ENCODE measurements at regions of chr17 and their contacts with region 1.

Region 1: GRCh38 chr17:19362277-19363113 is at the start of gene B9D1:
- DNase-seq: peak; percentile 94
- ATAC-seq: peak; percentile 82
- H3K4me3 Mint-ChIP-seq: peak within 1 kb of the TSS; percentile 83
- H3K27ac Mint-ChIP-seq: peak within 1 kb of the TSS; percentile 73
- H3K4me1 Mint-ChIP-seq: peaks cover 22% of the 10 kb centered on the region
- H3K27me3 Mint-ChIP-seq: no peaks in the 10 kb centered on the region
- CTCF ChIP-seq: peak; percentile 96
- total RNA-seq, gene B9D1: 31.9 to 39.2 TPM (median 39.0 TPM) in 3 replicates

Region 2: GRCh38 chr17:19338031-19338990 is 24.2 kb before region 1 on chr17:
- CTCF ChIA-PET with region 1: interaction called, 58 read pairs
- POLR2A ChIA-PET with region 1: no interaction called
- DNase-seq: peak; percentile 76
- ATAC-seq: peak; percentile 62
- H3K4me3 Mint-ChIP-seq: 0 out of 2 replicates have a peak overlapping the region, but pooled peaks have one; percentile 12
- H3K27ac Mint-ChIP-seq: peak overlapping the region; percentile 95
- H3K4me1 Mint-ChIP-seq: peaks cover 46% of the 10 kb centered on the region
- H3K27me3 Mint-ChIP-seq: no peaks in the 10 kb centered on the region
- CTCF ChIP-seq: 0 out of 2 replicates have a peak, but pooled peaks have one; percentile 22

Region 3: GRCh38 chr17:19392303-19392702 is 29.8 kb after region 1 on chr17:
- CTCF ChIA-PET with region 1: interaction called, 48 read pairs
- POLR2A ChIA-PET with region 1: no interaction called
- DNase-seq: no peak
- ATAC-seq: no peak
- H3K4me3 Mint-ChIP-seq: no peak overlapping the region
- H3K27ac Mint-ChIP-seq: no peak overlapping the region
- H3K4me1 Mint-ChIP-seq: peaks cover 31% of the 10 kb centered on the region
- H3K27me3 Mint-ChIP-seq: no peaks in the 10 kb centered on the region; the same call in 1 of the 2 replicates
- CTCF ChIP-seq: no peak

Region 4: DNA sequence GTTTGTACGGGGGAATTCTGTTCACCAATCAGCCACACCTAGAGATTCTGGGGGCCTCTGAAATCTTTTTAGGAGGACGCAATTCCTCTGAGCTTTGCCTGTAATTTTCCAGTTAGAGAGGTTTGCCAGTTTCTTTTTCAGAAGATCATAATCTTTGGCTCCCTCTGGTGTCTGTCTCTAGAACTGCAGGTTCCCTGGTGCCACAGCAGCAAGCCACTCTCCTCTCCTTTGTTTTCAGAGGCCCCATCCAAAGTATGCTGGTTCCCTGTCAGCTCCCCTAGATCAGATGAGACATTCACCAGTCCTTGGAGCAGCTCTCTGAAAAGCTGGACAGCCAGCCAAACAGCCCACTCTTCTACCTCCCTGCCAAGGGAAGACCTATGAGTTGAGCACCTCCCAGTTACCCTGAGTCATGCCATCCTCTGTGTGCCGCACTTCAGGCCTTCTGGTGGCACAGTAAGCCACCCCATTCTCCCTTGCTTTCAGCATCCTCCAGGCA is 84.6 kb after region 1 on chr17:
- CTCF ChIA-PET with region 1: interaction called, 91 read pairs
- POLR2A ChIA-PET with region 1: no interaction called
- DNase-seq: peak; percentile 80
- ATAC-seq: peak; percentile 90
- H3K4me3 Mint-ChIP-seq: no peak overlapping the region
- H3K27ac Mint-ChIP-seq: peak overlapping the region; percentile 63
- H3K4me1 Mint-ChIP-seq: peaks cover 25% of the 10 kb centered on the region
- H3K27me3 Mint-ChIP-seq: peaks cover 10% of the 10 kb centered on the region
- CTCF ChIP-seq: peak; percentile 99

Region 5: DNA sequence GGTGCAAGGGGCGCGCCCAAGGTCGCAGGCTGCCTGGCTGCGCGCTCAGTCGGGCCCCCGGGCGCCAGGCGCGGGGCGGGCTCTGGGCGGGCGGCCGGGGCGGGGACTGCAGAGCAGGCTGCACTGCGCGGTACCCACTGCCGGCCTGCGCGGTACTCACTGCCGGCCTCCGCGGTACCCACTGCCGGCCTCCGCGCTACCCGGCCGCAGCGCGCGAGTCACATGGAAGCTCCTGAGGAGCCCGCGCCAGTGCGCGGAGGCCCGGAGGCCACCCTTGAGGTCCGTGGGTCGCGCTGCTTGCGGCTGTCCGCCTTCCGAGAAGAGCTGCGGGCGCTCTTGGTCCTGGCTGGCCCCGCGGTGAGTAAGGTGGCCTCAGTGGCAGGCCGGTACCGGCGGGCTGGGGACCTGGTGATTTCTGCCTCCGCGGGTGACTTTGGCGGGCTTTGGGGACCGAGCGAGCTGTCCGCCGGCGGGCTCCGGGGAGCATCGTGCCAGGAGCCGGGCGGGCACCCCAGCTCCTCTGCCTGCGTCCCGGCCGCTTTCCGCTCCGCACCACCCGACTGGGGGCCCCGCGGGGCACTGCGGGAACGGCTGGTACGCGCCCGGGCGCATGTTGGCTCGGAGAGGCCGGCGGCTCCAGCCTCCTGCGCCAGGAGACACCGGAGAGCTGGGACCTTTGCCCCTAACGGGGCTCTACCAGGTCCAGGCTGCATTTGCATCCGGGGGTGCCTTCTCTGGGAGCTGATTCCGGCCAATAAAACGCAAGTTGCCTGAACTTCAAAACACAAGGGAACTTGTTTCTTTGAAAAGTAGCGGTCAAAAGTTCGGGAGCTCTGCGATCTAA is 171.4 kb after region 1 on chr17 and contains the start of gene SLC47A1:
- CTCF ChIA-PET with region 1: interaction called, 10 read pairs
- POLR2A ChIA-PET with region 1: no interaction called
- DNase-seq: peak; percentile 42
- ATAC-seq: peak; percentile 83
- H3K4me3 Mint-ChIP-seq: peak within 1 kb of the TSS; percentile 71
- H3K27ac Mint-ChIP-seq: no peak within 1 kb of the TSS
- H3K4me1 Mint-ChIP-seq: peaks cover 35% of the 10 kb centered on the region
- H3K27me3 Mint-ChIP-seq: peaks cover 43% of the 10 kb centered on the region
- CTCF ChIP-seq: no peak
- total RNA-seq, gene SLC47A1: 2.5 to 3.3 TPM (median 2.9 TPM) in 3 replicates

Region 6: GRCh38 chr17:19648475-19649406 is 286.2 kb after region 1 on chr17 and contains the start of gene ALDH3A2:
- CTCF ChIA-PET with region 1: interaction called, 37 read pairs
- POLR2A ChIA-PET with region 1: interaction called, 3 read pairs
- DNase-seq: peak; percentile 89
- ATAC-seq: peak; percentile 83
- H3K4me3 Mint-ChIP-seq: peak within 1 kb of the TSS; percentile 92
- H3K27ac Mint-ChIP-seq: peak within 1 kb of the TSS; percentile 84
- H3K4me1 Mint-ChIP-seq: peaks cover 58% of the 10 kb centered on the region
- H3K27me3 Mint-ChIP-seq: peaks cover 8% of the 10 kb centered on the region
- CTCF ChIP-seq: no peak
- total RNA-seq, gene ALDH3A2: 68.5 to 84.3 TPM (median 80.6 TPM) in 3 replicates

Region 7: DNA sequence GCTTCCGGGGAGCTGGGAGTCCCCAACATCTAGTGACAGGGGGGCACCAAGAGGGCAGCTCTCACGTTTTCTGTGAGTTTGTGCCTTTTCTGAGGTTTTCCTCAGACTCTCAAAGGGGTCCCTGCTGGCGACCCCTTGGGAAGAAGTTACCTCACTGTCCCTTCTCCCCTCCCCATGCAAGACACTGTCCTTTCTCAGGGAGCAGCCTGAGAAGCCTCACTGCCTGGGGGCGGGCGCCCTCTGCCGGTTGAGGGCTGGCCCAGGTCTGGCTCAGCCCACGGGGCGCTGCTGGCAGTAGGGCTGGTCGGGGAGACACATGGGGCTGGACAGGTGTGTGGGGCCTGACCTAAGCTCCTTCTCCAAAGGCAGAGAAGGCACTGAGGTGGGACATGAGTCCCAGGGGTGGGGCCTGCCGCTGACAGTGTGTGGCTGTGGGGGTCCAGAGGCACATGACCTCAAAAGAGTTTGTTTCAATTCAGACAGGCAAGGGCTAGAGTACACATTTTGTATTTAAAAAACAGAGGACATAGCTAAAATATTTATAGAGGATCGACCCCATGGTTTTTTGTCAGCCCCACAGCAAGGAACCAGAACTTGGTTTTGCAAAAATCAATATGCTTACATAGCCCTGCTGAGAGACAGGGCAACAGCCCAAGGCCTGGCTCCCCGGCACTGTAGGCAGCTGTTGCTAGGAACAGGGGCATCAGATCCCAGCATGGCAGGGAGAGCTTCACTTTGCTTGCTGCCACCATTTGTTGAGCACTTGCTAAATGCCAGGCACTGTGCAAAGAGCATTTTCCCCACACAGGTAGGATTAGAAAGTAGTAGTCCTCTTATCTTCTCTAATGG is 404.2 kb after region 1 on chr17:
- CTCF ChIA-PET with region 1: interaction called, 49 read pairs
- POLR2A ChIA-PET with region 1: interaction called, 3 read pairs
- DNase-seq: peak; percentile 90
- ATAC-seq: peak; percentile 91
- H3K4me3 Mint-ChIP-seq: no peak overlapping the region
- H3K27ac Mint-ChIP-seq: no peak overlapping the region
- H3K4me1 Mint-ChIP-seq: 0 out of 2 replicates have a peak, but pooled peaks cover 2% of the 10 kb centered on the region
- H3K27me3 Mint-ChIP-seq: no peaks in the 10 kb centered on the region
- CTCF ChIP-seq: peak; percentile 64; the same call in 1 of the 2 replicates

Measured in WTC11 (cell line).